Activated B cell treated with CpG ODN at 0.5 μM for 24 hours (primary cell): ENCODE measurements at regions of chr12 and their contacts with region 1.

Region 1: GRCh38 chr12:30754709-30755394 is at the start of gene CAPRIN2:
- DNase-seq: peak; percentile 97
- ATAC-seq: peak; percentile 88
- H3K4me3 Mint-ChIP-seq: peak within 1 kb of the TSS; percentile 95
- H3K27ac Mint-ChIP-seq: peak within 1 kb of the TSS; percentile 90
- H3K4me1 Mint-ChIP-seq: peaks cover 20% of the 10 kb centered on the region
- H3K27me3 Mint-ChIP-seq: no peaks in the 10 kb centered on the region
- CTCF ChIP-seq: no peak
- total RNA-seq, gene CAPRIN2: 17.5 and 18.7 TPM in 2 replicates

Region 2: DNA sequence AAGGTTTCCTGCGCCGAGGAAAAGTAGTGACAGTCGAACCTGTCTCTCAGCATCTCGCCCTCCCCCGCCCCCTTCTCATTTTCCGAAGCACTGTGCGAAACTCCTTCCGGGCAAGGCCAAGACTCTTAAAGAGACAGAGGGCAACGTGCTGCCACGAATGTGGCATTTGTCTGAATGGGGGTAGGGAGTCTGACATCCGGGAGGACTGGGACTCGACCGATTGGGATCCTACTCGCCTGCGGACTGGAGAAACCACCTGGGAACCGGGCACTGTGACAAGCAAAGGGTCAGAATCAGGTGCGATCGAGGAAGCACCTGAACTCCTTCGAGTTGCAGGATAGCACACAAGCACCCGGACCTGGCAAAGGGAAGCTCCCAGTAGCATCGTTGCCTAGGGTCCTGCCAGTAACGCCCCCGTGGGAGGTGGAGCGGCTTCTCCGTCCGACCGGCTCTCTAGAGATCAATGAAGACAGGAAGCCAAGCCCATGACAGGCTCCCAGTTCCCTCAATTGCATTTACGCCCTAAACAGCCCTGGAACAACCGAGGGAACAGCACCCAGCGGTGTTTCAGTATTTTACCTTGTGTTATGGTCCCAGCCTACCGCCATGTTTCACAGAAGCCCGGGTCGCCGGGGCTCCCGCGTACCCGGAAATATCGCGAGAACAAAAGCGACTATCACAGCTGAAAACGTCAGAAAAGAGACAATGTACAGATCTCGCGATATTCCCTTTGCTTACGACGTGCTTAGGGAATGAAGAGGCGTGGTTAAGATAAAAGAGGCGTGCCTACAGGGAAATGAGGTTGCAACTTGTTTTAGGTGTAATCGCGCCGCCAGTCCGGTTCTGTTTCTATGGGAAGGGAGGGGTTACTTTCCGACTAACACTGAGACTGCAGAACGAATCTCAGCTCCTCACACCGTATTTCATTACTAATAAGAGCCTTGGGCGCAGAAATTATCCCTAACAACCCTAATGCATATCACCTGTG is 1374.0 kb before region 1 on chr12 and contains the start of gene ERGIC2:
- CTCF ChIA-PET with region 1: no interaction called
- POLR2A ChIA-PET with region 1: interaction called, 5 read pairs
- intact Hi-C with region 1: loop called (anchors 1 kb)
- DNase-seq: peak; percentile 73
- ATAC-seq: peak; percentile 94
- H3K4me3 Mint-ChIP-seq: peak within 1 kb of the TSS; percentile 94
- H3K27ac Mint-ChIP-seq: peak within 1 kb of the TSS; percentile 94
- H3K4me1 Mint-ChIP-seq: peaks cover 42% of the 10 kb centered on the region
- H3K27me3 Mint-ChIP-seq: no peaks in the 10 kb centered on the region
- CTCF ChIP-seq: no peak
- total RNA-seq, gene ERGIC2: 43.7 TPM in 2 replicates

Region 3: GRCh38 chr12:30695199-30696103 is 59.4 kb before region 1 on chr12 and contains the start of gene IPO8:
- CTCF ChIA-PET with region 1: interaction called, 15 read pairs
- POLR2A ChIA-PET with region 1: interaction called, 31 read pairs
- intact Hi-C with region 1: loop called (anchors 1 kb)
- DNase-seq: peak; percentile 73
- ATAC-seq: peak; percentile 90
- H3K4me3 Mint-ChIP-seq: peak within 1 kb of the TSS; percentile 98
- H3K27ac Mint-ChIP-seq: peak within 1 kb of the TSS; percentile 91
- H3K4me1 Mint-ChIP-seq: peaks cover 38% of the 10 kb centered on the region
- H3K27me3 Mint-ChIP-seq: no peaks in the 10 kb centered on the region
- CTCF ChIP-seq: no peak
- total RNA-seq, gene IPO8: 52.0 and 55.4 TPM in 2 replicates

Region 4: DNA sequence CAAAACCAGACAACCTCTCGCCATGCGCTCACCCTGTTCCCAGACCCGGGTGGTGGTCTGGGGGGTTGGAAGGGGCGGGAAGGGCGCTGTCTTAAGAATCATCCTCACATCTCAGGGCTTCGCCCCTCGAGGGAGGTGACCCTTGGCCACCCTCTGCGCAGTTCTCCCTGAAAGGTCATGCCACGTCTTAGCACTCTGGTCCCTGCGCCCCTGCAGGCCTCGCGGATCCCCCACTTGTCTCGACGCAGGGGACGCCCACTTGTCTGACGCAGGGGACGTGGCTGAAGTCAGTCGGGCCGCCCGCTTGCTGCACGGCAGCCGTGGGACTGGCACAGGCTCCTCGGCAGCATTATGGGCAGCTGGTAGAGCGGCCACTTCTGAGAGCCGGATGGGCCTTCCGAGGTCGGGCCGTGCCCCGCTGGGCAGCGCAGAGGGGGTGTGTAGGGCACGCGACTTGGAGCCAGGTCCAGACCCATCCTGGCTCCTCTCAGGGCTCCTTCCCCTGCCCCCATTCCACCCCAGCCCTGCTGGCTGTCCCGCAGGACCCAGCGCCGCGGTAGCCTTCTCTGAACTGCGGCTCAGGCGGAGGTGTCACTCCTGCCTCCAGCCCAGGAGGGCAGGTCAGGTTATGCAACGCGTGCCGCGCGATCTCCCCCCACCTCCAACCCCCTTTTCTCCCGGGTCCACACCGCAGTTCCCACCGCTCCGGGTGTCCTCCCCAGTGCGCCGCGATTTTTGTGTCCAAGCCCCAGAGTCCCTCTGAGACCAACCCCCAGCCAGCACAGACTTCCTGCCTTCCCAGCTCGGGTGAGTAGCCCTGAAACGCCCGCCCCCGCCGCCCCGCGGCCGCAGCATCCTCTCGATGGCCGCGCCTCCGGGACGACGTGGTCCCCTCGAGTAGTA is 40.8 kb after region 1 on chr12:
- CTCF ChIA-PET with region 1: no interaction called
- POLR2A ChIA-PET with region 1: interaction called, 10 read pairs
- intact Hi-C with region 1: loop called (anchors 2 kb)
- DNase-seq: peak; percentile 22
- ATAC-seq: peak; percentile 75
- H3K4me3 Mint-ChIP-seq: peak overlapping the region; percentile 73
- H3K27ac Mint-ChIP-seq: no peak overlapping the region
- H3K4me1 Mint-ChIP-seq: peaks cover 23% of the 10 kb centered on the region
- H3K27me3 Mint-ChIP-seq: peaks cover 47% of the 10 kb centered on the region
- CTCF ChIP-seq: no peak

Region 5: DNA sequence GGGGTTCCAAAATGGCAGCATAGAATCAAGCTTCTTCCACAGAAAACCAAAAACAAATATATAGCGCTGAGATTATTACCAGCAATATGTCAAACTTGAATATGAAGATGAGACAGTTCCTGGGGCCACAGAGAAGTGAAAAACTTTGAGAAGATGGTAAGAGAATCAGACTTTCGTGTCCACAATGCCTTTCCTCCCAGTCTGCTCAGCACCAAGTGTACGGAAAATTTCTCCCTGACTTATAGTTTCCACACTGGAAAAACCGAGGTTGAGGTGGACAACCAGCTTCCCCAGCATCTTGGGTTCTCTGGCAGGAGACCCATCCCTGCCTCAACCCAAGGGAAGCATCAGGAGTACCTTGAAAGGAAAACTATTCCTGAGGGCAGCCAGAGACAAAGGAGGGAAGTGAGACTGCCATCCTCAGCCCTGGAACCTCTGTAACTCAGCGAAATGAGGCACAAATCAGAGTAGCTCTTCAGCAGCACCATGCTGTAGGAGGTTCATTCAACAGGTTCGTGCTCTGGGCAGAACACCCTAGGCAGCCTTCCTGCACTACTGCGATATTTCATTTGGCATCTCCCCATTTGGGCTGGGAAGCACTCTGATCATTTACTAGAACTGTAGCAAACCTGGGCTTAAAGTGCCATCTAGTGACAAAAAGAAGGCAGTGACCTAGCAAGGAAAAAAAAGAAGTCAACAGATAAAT is 52.3 kb after region 1 on chr12:
- CTCF ChIA-PET with region 1: interaction called, 6 read pairs
- POLR2A ChIA-PET with region 1: no interaction called
- intact Hi-C with region 1: loop called (anchors 1 kb)
- DNase-seq: no peak
- ATAC-seq: no peak
- H3K4me3 Mint-ChIP-seq: no peak overlapping the region
- H3K27ac Mint-ChIP-seq: no peak overlapping the region
- H3K4me1 Mint-ChIP-seq: no peaks in the 10 kb centered on the region
- H3K27me3 Mint-ChIP-seq: peaks cover 10% of the 10 kb centered on the region
- CTCF ChIP-seq: peak; percentile 69

Region 6: GRCh38 chr12:30882706-30883105 is 127.9 kb after region 1 on chr12:
- CTCF ChIA-PET with region 1: no interaction called
- POLR2A ChIA-PET with region 1: no interaction called
- intact Hi-C with region 1: no loop called
- DNase-seq: no peak
- ATAC-seq: no peak
- H3K4me3 Mint-ChIP-seq: no peak overlapping the region
- H3K27ac Mint-ChIP-seq: no peak overlapping the region
- H3K4me1 Mint-ChIP-seq: no peaks in the 10 kb centered on the region
- H3K27me3 Mint-ChIP-seq: peaks cover 12% of the 10 kb centered on the region
- CTCF ChIP-seq: no peak

Region 7: GRCh38 chr12:32755654-32756475 is 2001.0 kb after region 1 on chr12 and contains the start of gene YARS2:
- CTCF ChIA-PET with region 1: no interaction called
- POLR2A ChIA-PET with region 1: no interaction called
- intact Hi-C with region 1: loop called (anchors 2 kb)
- DNase-seq: peak; percentile 75
- ATAC-seq: peak; percentile 87
- H3K4me3 Mint-ChIP-seq: peak within 1 kb of the TSS; percentile 95
- H3K27ac Mint-ChIP-seq: peak within 1 kb of the TSS; percentile 92
- H3K4me1 Mint-ChIP-seq: peaks cover 17% of the 10 kb centered on the region
- H3K27me3 Mint-ChIP-seq: no peaks in the 10 kb centered on the region
- CTCF ChIP-seq: no peak
- total RNA-seq, gene YARS2: 19.6 and 23.2 TPM in 2 replicates